HepG2 (cell line): ENCODE measurements at regions of chr19 and their contacts with region 1.

Region 1: DNA sequence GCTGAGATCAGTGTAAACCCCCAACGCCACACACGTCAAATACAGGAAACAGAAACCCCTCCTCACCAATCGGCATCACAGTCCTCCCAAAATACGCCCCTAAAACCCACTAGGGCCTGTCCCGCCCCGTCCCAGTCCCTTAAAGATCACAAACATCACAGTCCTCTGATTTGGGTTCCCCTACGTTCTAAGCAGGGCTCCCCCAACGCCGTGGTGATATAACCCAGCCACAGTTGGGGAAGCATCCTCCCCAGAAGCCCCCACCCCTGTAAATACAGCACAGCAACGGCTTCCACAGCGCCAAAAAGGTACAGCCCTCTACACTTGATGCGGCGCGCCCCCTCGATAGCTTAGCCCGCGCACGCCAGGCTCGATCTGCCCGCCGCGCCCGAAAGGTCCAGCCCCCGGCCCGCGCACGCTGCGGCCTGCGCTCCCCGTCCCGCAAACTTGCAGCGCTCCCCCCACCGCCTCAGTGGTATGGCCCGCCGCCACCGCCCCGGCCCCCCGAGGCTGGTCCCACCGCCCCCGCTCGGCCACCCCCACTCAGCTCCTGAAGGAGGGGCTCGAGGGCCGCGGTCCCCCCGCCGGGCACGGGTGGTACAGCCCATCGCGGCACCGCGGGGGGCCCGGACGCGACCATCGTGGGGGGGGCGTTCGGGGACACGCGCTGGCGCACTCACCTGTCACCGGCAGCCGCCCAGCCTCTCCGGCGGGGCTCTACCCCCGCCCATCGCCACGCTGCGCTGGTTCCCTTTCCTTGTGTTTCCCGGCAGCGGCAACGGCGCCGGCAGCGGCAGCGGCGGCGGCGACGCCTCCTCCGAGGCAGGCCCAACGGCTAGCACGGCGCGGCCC is at the start of gene AKT2:
- DNase-seq: no peak
- ATAC-seq: peak; percentile 45
- H3K4me3 ChIP-seq: peak within 1 kb of the TSS; percentile 85 to 94 (median 94)
- H3K27ac ChIP-seq: peak within 1 kb of the TSS; percentile 90
- H3K4me1 ChIP-seq: peaks cover 57% of the 10 kb centered on the region
- H3K27me3 ChIP-seq: no peaks in the 10 kb centered on the region; a peak in 1 of 5 replicates
- CTCF ChIP-seq: no peak
- EP300 ChIP-seq: no peak
- POLR2A ChIP-seq: peak; percentile 13 to 54; a peak in 3 of 4 replicates
- RAD21 ChIP-seq: no peak
- total RNA-seq, gene AKT2: 82.1 and 82.7 TPM in 2 replicates

Region 2: GRCh38 chr19:40231544-40232424 is 52.9 kb before region 1 on chr19:
- CTCF ChIA-PET with region 1: no interaction called
- POLR2A ChIA-PET with region 1: interaction called, 25 read pairs
- in situ Hi-C with region 1: no loop called
- intact Hi-C with region 1: no loop called
- DNase-seq: peak; percentile 82
- ATAC-seq: peak; percentile 86
- H3K4me3 ChIP-seq: peak overlapping the region; percentile 27 to 69 (median 55); a peak in 5 of 6 replicates
- H3K27ac ChIP-seq: peak overlapping the region; percentile 83
- H3K4me1 ChIP-seq: peaks cover 63% of the 10 kb centered on the region
- H3K27me3 ChIP-seq: no peaks in the 10 kb centered on the region
- CTCF ChIP-seq: peak; percentile 24; the same call in 1 of the 2 replicates
- EP300 ChIP-seq: peak in 1 of 2 experiments; percentile 67; a peak in 3 of 4 replicates
- POLR2A ChIP-seq: peak; percentile 73 to 85
- RAD21 ChIP-seq: no peak

Region 3: GRCh38 chr19:40246292-40247073 is 38.2 kb before region 1 on chr19:
- CTCF ChIA-PET with region 1: no interaction called
- POLR2A ChIA-PET with region 1: no interaction called
- in situ Hi-C with region 1: loop called (anchors 5 kb)
- intact Hi-C with region 1: no loop called
- DNase-seq: no peak
- ATAC-seq: no peak
- H3K4me3 ChIP-seq: no peak overlapping the region
- H3K27ac ChIP-seq: no peak overlapping the region
- H3K4me1 ChIP-seq: peaks cover 21% of the 10 kb centered on the region
- H3K27me3 ChIP-seq: no peaks in the 10 kb centered on the region
- CTCF ChIP-seq: no peak
- EP300 ChIP-seq: no peak
- POLR2A ChIP-seq: no peak
- RAD21 ChIP-seq: no peak

Region 4: DNA sequence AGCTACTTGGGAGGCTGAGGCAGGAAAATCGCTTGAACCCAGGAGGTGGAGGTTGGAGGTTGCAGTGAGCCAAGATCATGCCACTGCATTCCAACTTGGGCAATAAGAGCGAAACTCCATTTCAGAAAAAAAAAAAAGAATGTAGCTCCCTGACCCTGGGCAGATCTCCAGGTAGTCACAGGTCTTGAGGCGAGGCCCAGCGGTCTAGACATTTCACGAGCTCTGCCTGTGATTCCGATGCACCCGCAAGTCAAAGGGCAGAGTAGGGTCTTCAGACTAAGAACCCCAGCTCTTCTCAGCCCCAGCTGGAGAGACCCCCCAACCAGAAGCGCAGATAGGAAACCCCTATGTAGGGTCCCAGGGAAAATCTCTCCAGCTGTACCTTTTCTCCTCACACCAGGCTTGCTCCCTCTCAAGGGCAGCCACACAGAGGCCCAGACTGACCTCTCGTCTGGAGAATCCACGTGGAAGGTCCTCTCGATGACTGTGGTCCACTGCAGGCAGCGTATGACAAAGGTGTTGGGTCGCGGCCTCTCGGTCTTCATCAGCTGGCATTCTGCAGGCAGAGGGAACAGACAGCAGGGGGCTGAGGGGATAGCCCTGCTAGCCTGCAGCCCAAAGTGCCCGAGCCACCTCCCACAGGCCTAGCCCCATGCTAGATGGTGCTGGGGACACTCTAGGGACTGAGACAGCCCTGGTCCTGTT is 29.9 kb before region 1 on chr19:
- CTCF ChIA-PET with region 1: no interaction called
- POLR2A ChIA-PET with region 1: interaction called, 6 read pairs
- in situ Hi-C with region 1: no loop called
- intact Hi-C with region 1: loop called (anchors 1 kb)
- DNase-seq: no peak
- ATAC-seq: peak; percentile 36
- H3K4me3 ChIP-seq: no peak overlapping the region
- H3K27ac ChIP-seq: peak overlapping the region; percentile 81
- H3K4me1 ChIP-seq: peaks cover 64% of the 10 kb centered on the region
- H3K27me3 ChIP-seq: no peaks in the 10 kb centered on the region
- CTCF ChIP-seq: 0 out of 2 replicates have a peak, but pooled peaks have one; percentile 4
- EP300 ChIP-seq: no peak
- POLR2A ChIP-seq: no peak
- RAD21 ChIP-seq: no peak

Region 5: GRCh38 chr19:40270362-40271089 is 14.2 kb before region 1 on chr19:
- CTCF ChIA-PET with region 1: no interaction called
- POLR2A ChIA-PET with region 1: no interaction called
- in situ Hi-C with region 1: no loop called
- intact Hi-C with region 1: no loop called
- DNase-seq: no peak
- ATAC-seq: no peak
- H3K4me3 ChIP-seq: no peak overlapping the region
- H3K27ac ChIP-seq: no peak overlapping the region
- H3K4me1 ChIP-seq: peaks cover 19% of the 10 kb centered on the region
- H3K27me3 ChIP-seq: no peaks in the 10 kb centered on the region
- CTCF ChIP-seq: no peak
- EP300 ChIP-seq: no peak
- POLR2A ChIP-seq: no peak
- RAD21 ChIP-seq: no peak